ENCODE measurements at regions of chr3 and their contacts with region 1.

Region 1: GRCh38 chr3:133949438-133949837 is 53.8 kb upstream of the RAB6B start:
- DNase-seq: no peak
- ATAC-seq: no peak
- H3K4me3 Mint-ChIP-seq: no peak overlapping the region
- H3K27ac Mint-ChIP-seq: no peak overlapping the region
- H3K4me1 Mint-ChIP-seq: no peaks in the 10 kb centered on the region
- H3K27me3 Mint-ChIP-seq: no peaks in the 10 kb centered on the region
- CTCF ChIP-seq: no peak

Region 2: GRCh38 chr3:133989936-133990702 is 40.7 kb after region 1 on chr3:
- CTCF ChIA-PET with region 1: no interaction called
- POLR2A ChIA-PET with region 1: no interaction called
- intact Hi-C with region 1: loop called (anchors 1 kb)
- DNase-seq: no peak
- ATAC-seq: no peak
- H3K4me3 Mint-ChIP-seq: no peak overlapping the region
- H3K27ac Mint-ChIP-seq: no peak overlapping the region
- H3K4me1 Mint-ChIP-seq: no peaks in the 10 kb centered on the region
- H3K27me3 Mint-ChIP-seq: peaks cover 13% of the 10 kb centered on the region
- CTCF ChIP-seq: no peak

Measured in activated B cell treated with CpG ODN at 0.5 μM for 24 hours (primary cell).